ENCODE measurements at regions of chr5 and their contacts with region 1.

Region 1: GRCh38 chr5:169805527-169805934 is 168.5 kb downstream of the DOCK2 start:
- DNase-seq: peak; percentile 25
- H3K4me3 Mint-ChIP-seq: peak overlapping the region; percentile 51
- H3K27ac Mint-ChIP-seq: peak overlapping the region; percentile 97
- H3K4me1 Mint-ChIP-seq: peaks cover 53% of the 10 kb centered on the region
- H3K27me3 Mint-ChIP-seq: no peaks in the 10 kb centered on the region

Region 2: DNA sequence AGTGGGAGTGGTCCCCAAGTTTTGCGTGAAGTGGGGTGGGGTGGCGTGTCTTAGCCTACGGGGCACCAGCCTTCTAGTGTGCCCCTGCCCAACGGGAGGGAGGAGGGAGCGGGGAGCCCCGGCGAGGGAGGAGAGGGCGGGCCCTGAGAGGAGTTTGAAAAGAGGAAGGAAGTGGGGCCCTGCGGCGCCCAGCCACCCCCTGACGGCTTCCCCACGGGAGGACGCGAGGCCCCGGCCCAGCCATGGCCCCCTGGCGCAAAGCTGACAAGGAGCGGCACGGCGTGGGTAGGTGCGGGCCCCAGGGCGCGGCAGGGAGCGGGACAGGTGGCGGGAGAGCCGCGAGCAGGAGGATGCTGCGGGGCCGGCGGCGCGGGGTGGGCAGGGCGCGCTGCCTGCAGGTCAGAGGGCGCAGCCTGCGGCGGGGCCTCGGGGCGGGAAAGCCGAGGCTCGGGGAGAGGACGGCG is 168.4 kb before region 1 on chr5 and contains the start of gene DOCK2:
- intact Hi-C with region 1: loop called (anchors 5 kb)
- DNase-seq: peak; percentile 68
- H3K4me3 Mint-ChIP-seq: peak within 1 kb of the TSS; percentile 86
- H3K27ac Mint-ChIP-seq: peak within 1 kb of the TSS; percentile 92
- H3K4me1 Mint-ChIP-seq: peaks cover 57% of the 10 kb centered on the region
- H3K27me3 Mint-ChIP-seq: no peaks in the 10 kb centered on the region
- total RNA-seq, gene DOCK2: 214 and 216 TPM in 2 replicates

Region 3: DNA sequence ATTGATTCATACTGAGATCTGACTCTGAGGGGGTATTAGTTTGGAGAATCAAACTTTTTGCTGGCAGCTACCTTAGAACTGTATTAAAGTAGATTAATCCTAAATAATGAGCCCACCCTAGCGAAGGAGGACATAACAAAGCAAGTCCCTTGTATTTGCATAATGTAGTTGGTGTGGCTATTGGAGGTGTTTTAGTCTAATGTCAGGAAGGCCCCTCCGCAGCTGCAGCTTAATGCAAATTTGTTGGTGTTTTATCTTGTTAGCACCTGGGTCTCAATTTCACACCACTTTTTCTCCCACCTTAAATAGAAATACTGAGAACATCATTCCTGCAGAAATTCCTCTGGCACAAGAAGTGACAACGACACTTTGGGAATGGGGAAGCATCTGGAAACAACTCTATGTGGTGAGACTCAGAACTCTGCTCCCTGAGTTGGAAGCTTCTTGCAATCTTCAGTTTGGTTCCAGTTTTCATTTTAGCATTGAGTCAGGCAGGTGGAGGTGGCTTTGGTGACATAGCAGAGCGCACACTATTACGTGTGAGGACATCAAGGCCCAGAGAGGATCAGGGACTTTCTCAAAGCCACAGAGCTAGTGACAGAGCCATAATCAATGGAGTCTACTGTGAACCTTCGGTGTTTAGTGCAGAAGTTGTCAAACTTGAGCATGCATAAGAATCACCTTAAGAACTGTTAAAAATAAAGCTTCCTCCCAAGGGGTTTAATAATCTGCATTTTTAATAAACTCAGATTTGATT is 134.6 kb before region 1 on chr5:
- intact Hi-C with region 1: loop called (anchors 5 kb)
- DNase-seq: peak; percentile 58
- H3K4me3 Mint-ChIP-seq: peak overlapping the region; percentile 4
- H3K27ac Mint-ChIP-seq: peak overlapping the region; percentile 79
- H3K4me1 Mint-ChIP-seq: peaks cover 61% of the 10 kb centered on the region
- H3K27me3 Mint-ChIP-seq: no peaks in the 10 kb centered on the region

Region 4: GRCh38 chr5:169778622-169779596 is 26.6 kb before region 1 on chr5:
- intact Hi-C with region 1: loop called (anchors 2 kb)
- DNase-seq: no peak
- H3K4me3 Mint-ChIP-seq: no peak overlapping the region
- H3K27ac Mint-ChIP-seq: peak overlapping the region; percentile 3
- H3K4me1 Mint-ChIP-seq: peaks cover 42% of the 10 kb centered on the region
- H3K27me3 Mint-ChIP-seq: no peaks in the 10 kb centered on the region

Region 5: GRCh38 chr5:169828385-169828784 is 22.9 kb after region 1 on chr5:
- intact Hi-C with region 1: loop called (anchors 2 kb)
- DNase-seq: no peak
- H3K4me3 Mint-ChIP-seq: no peak overlapping the region
- H3K27ac Mint-ChIP-seq: peak overlapping the region; percentile 27
- H3K4me1 Mint-ChIP-seq: peaks cover 51% of the 10 kb centered on the region
- H3K27me3 Mint-ChIP-seq: no peaks in the 10 kb centered on the region

Region 6: GRCh38 chr5:170216266-170216864 is 410.8 kb after region 1 on chr5:
- intact Hi-C with region 1: no loop called
- DNase-seq: no peak
- H3K4me3 Mint-ChIP-seq: no peak overlapping the region
- H3K27ac Mint-ChIP-seq: no peak overlapping the region
- H3K4me1 Mint-ChIP-seq: no peaks in the 10 kb centered on the region
- H3K27me3 Mint-ChIP-seq: peaks cover 9% of the 10 kb centered on the region

Region 7: DNA sequence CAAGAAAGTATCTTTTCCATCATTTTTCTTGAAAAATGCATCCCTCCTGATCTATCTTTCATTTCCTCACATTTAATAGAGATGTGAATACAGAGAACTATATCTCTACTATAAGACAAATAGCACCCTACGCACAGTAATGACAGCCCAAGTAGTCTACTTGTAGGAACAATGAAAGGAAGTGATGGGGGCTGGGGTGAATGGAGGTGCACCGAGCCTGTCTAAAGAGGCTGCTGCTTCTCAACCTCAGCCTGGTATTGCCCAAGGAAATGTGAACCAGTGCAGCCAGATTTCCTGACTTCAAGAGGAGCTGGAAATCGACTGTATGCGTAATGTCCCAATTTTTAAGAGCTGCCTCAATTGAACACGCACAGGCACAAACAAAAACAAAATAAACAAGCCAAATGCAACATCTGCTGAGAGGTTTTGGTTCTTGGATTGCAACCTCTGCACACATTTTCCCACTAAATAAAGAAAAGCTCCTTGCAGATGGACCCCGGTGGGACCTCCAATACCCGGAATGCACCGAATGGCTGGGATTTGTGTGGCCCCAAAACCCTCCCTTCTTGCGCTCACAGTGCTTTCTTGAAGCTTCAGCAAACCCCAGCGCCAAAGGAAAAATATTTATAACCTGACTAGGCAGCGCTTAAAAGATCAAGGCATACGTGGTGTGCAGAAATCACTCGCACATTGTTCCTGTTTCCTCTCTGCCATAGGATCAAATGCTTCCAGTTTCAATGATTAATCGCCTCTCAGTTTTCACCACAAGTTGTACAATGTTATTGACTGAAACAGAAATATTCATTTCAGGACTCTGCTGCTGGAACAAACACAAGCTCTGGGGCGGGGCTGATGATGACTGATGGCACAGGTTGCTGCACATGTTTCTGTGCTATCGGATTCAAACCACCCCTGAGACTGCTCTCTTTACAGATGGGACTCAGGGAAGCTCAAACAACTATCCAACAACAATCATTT is 766.6 kb after region 1 on chr5:
- intact Hi-C with region 1: loop called (anchors 1 kb)
- DNase-seq: peak; percentile 1
- H3K4me3 Mint-ChIP-seq: no peak overlapping the region
- H3K27ac Mint-ChIP-seq: peak overlapping the region; percentile 0
- H3K4me1 Mint-ChIP-seq: peaks cover 21% of the 10 kb centered on the region
- H3K27me3 Mint-ChIP-seq: peaks cover 35% of the 10 kb centered on the region